ENCODE measurements at regions of chr7 and their contacts with region 1.

Region 1: DNA sequence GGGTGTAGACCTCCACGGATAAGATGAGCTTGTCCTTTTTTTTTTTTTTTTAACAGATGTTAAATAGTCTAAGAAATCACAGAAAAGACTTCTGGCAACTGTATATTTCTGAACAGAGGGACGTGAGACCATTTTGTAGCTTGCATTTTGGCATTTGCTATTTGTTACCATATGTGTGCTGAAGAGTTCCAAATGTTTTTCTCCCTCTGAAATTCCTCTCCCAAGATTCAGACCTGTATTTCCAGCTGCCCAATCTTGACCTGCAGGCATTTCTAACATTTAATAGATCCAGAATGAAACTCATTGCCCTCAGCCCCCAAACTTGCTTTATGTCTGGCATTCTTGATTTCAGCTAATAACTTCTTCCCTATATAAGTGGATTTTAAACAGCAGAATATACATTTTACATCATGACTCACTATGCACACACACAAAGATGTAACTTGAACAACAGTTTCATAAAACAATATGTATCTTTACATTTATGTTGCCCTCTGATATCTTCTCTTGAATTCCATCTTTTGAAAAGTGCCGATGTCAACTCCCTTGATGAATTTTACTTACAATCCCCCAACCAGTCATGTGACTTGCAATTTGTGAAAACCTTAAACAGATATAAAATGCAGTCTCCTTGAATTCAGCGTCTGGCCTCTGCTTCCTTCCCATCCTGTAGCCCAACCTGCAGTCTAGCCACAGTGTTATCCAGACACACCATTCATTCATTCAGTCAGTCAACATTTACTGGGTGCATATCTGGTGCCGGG is 222.9 kb upstream of the FZD1 start:
- DNase-seq: no peak
- H3K4me3 ChIP-seq: no peak overlapping the region
- H3K27ac ChIP-seq: no peak overlapping the region
- H3K4me1 ChIP-seq: no peaks in the 10 kb centered on the region
- H3K27me3 ChIP-seq: no peaks in the 10 kb centered on the region
- CTCF ChIP-seq: no peak

Region 2: DNA sequence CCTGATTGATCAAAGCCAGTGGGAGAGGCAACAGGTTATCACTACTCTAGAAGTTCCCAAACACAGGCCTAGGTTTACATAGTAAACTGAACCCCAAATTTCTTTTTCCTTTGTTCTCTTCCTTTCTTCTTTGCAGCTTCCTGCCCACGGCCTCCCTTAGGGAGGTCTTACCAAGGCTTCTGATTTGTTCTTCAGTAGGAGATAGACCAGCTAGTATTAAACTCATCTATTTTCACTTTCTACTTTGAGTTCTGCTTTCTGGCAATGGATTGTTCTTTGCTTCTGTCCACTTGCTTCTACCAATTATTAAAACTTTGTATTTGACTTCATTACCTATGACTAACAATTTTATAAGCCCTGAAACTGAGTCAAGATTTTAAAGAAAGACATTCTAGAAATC is 28.2 kb before region 1 on chr7:
- CTCF ChIA-PET with region 1: no interaction called
- POLR2A ChIA-PET with region 1: no interaction called
- intact Hi-C with region 1: no loop called
- DNase-seq: no peak
- H3K4me3 ChIP-seq: no peak overlapping the region
- H3K27ac ChIP-seq: no peak overlapping the region
- H3K4me1 ChIP-seq: no peaks in the 10 kb centered on the region
- H3K27me3 ChIP-seq: no peaks in the 10 kb centered on the region
- CTCF ChIP-seq: no peak

Region 3: DNA sequence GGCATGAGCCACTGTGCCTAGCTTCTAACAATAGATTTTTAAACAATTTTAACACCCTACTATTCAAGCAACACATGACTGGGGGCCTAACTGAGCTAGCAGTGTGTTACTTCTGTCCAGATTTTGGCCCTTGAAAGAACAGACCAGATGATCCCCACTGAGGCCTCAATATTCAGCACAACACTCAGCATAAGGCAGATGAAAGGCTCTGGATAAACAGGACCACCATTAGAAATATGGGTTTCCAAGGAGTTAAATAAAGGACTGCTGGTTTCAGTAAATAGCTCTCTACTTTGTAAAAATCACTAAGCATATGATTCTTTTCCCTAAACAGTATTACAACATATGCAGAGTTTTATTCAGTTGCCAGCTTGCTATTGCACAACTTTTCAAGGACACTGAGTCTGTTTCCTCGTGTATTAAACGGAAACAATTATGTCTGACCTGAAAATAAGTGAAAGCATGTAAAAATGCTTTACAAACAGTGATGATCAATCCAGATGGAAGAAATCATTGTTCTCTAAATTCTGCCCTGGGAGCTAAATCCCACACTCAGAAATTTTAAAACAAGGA is 199.1 kb after region 1 on chr7:
- CTCF ChIA-PET with region 1: no interaction called
- POLR2A ChIA-PET with region 1: no interaction called
- intact Hi-C with region 1: no loop called
- DNase-seq: no peak
- H3K4me3 ChIP-seq: no peak overlapping the region
- H3K27ac ChIP-seq: no peak overlapping the region
- H3K4me1 ChIP-seq: no peaks in the 10 kb centered on the region
- H3K27me3 ChIP-seq: no peaks in the 10 kb centered on the region
- CTCF ChIP-seq: no peak

Region 4: DNA sequence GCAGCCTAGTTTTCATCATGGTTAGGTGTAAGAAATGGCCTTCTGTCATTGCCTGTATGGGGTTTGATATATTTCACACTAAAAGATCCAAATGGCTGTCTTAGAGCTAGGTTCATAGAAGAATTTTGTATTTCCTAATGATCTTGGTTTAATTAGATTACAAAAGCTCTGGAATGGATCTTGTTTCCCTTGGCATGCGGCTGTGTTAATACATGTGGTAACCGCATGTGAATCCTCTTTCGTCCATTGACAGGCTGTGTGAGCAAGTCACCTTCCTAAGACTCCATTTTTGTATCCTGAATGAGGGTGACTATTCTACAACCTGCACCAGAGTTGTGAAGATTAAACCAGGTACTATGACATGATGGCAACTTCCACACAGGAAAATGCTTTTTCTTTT is 210.6 kb after region 1 on chr7:
- CTCF ChIA-PET with region 1: no interaction called
- POLR2A ChIA-PET with region 1: no interaction called
- intact Hi-C with region 1: no loop called
- DNase-seq: no peak
- H3K4me3 ChIP-seq: no peak overlapping the region
- H3K27ac ChIP-seq: no peak overlapping the region
- H3K4me1 ChIP-seq: no peaks in the 10 kb centered on the region
- H3K27me3 ChIP-seq: no peaks in the 10 kb centered on the region
- CTCF ChIP-seq: no peak

Region 5: GRCh38 chr7:92164559-92164958 is 1123.2 kb after region 1 on chr7:
- CTCF ChIA-PET with region 1: no interaction called
- POLR2A ChIA-PET with region 1: interaction called, 10 read pairs
- intact Hi-C with region 1: no loop called
- DNase-seq: no peak
- H3K4me3 ChIP-seq: no peak overlapping the region
- H3K27ac ChIP-seq: no peak overlapping the region
- H3K4me1 ChIP-seq: no peaks in the 10 kb centered on the region
- H3K27me3 ChIP-seq: no peaks in the 10 kb centered on the region
- CTCF ChIP-seq: no peak